Panc1 (cell line): ENCODE measurements at regions of chr2 and their contacts with region 1.

Region 1: DNA sequence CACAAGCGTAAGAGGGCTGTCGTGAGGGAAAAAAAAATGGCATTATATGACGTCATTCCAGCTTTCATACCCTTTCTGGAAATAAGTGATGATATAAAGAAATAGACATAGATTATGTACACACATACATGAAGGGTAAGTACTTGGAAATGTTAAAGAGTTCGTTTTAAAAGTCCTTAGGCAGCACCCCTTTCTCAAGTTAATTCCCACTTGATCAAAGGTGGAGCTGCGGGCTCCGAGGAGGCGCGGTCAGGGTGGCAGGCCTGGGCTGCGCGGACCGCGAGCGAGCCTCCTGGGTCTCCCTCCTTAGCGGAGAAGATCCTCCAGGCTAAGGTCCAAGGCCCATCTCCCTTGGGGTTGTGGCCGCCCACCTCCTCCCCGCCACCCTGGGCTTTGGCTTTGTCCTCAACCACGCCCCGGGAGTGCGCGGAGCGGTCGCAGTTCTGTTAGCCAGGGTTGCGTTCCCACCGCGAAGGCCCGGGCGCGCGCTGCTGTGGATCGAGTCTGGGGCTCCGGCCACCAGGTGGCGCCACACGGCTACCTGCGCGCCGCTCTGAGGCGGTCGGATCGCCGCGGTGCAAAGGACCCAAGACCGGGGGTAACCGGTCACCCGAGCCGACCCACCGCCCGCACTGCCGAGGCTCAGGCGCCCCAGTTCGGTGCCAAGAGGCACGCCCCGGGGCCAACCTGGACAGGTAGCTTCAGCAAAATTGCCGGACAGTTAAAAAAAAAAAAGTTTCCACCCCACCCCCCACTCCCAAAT is 66.8 kb downstream of the HNRNPLL start:
- DNase-seq: no peak
- ATAC-seq: peak; percentile 96
- H3K4me3 ChIP-seq: peak overlapping the region; percentile 62 to 70
- H3K27ac ChIP-seq: peak overlapping the region; percentile 73
- H3K4me1 ChIP-seq: peaks cover 1% of the 10 kb centered on the region; the same call in 1 of the 2 replicates
- H3K27me3 ChIP-seq: no peaks in the 10 kb centered on the region
- CTCF ChIP-seq: peak; percentile 97

Region 2: DNA sequence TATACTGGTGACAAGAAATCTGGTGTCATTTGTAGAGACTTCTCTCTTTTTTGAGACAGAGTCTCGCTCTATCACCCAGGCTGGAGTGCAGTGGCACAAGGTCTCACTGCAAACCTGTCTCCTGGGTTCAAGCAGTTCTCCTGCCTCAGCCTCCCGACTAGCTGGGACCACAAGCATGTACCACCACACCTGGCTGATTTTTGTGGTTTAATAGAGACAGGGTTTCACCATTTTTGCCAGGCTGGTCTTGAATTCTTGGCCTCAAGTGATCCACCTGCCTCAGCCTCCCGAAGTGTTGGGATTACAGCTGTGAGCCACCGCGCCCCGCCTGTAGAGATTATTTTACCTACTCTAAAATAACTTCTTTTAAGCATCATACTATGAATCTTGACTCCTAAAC is 60.3 kb after region 1 on chr2:
- CTCF ChIA-PET with region 1: no interaction called
- POLR2A ChIA-PET with region 1: interaction called, 11 read pairs
- in situ Hi-C with region 1: no loop called
- intact Hi-C with region 1: no loop called
- DNase-seq: no peak
- ATAC-seq: no peak
- H3K4me3 ChIP-seq: no peak overlapping the region
- H3K27ac ChIP-seq: no peak overlapping the region
- H3K4me1 ChIP-seq: peaks cover 37% of the 10 kb centered on the region
- H3K27me3 ChIP-seq: no peaks in the 10 kb centered on the region
- CTCF ChIP-seq: no peak

Region 3: GRCh38 chr2:38698461-38699003 is 162.6 kb after region 1 on chr2:
- CTCF ChIA-PET with region 1: no interaction called
- POLR2A ChIA-PET with region 1: interaction called, 11 read pairs
- in situ Hi-C with region 1: no loop called
- intact Hi-C with region 1: no loop called
- DNase-seq: no peak
- ATAC-seq: no peak
- H3K4me3 ChIP-seq: no peak overlapping the region
- H3K27ac ChIP-seq: peak overlapping the region; percentile 41; the same call in 1 of the 2 replicates
- H3K4me1 ChIP-seq: peaks cover 27% of the 10 kb centered on the region
- H3K27me3 ChIP-seq: no peaks in the 10 kb centered on the region
- CTCF ChIP-seq: no peak

Region 4: DNA sequence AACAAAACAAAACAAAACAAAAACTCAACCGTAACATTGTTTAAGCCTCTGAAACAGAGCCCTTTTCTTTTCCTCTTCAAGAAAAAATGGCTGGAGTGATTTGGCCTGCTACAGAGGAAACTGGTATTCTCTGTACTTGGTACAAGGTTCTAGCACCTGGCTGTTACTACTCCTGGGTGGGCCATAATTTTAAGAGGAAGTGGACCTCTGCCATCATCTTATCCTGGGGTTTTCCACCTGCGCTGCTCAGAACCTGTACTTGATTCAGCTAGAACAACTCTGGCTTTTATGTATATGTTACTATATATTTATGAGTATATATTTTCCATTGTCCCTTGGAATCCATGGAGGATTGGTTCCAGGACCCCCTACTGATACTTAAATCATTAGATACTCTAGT is 192.8 kb after region 1 on chr2:
- CTCF ChIA-PET with region 1: no interaction called
- POLR2A ChIA-PET with region 1: no interaction called
- in situ Hi-C with region 1: no loop called
- intact Hi-C with region 1: loop called (anchors 5 kb)
- DNase-seq: no peak
- ATAC-seq: no peak
- H3K4me3 ChIP-seq: no peak overlapping the region
- H3K27ac ChIP-seq: no peak overlapping the region
- H3K4me1 ChIP-seq: no peaks in the 10 kb centered on the region
- H3K27me3 ChIP-seq: no peaks in the 10 kb centered on the region
- CTCF ChIP-seq: no peak

Region 5: GRCh38 chr2:38740851-38741731 is 205.2 kb after region 1 on chr2:
- CTCF ChIA-PET with region 1: no interaction called
- POLR2A ChIA-PET with region 1: interaction called, 11 read pairs
- in situ Hi-C with region 1: no loop called
- intact Hi-C with region 1: loop called (anchors 5 kb)
- DNase-seq: no peak
- ATAC-seq: peak; percentile 69
- H3K4me3 ChIP-seq: no peak overlapping the region
- H3K27ac ChIP-seq: no peak overlapping the region
- H3K4me1 ChIP-seq: peaks cover 22% of the 10 kb centered on the region
- H3K27me3 ChIP-seq: no peaks in the 10 kb centered on the region
- CTCF ChIP-seq: peak; percentile 78